Caco-2 (cell line): ENCODE measurements at regions of chr19 and their contacts with region 1.

Region 1: DNA sequence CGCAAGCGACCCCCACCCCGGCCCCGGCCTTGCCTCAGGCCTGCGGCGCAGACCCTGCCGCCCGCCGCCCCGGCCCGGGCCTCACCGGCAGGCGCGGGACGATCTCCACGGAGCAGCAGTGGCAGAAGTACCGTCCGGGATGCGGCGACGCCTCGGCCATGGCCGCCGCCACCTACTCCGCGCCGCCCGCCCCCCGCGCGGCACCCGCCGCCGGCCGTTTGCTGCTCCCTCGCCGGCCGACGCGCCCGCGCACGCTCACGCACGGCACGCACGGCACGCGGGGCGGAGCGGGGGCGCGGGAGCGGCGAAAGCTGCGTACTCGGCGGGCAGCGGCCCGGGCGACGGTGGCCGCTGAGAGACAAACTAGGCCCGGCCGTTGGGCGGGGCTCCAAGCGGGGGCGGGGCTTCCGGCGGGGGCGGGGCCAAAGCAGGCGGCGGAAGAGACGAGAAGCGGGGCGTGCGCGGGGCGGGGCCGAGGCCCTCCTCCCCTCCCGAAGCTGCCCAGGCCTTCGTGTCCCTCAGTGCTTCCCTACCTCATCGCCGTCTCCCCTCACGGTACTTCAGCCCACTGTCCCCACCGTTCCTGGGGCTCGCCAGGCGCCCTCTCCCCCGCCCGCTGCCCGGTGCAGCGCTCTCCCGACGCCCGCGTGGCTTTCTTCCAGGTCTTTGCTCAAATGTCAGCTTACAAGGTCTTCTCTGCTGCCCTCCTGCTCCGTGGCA is at the start of gene RNF126:
- DNase-seq: peak; percentile 90 to 91
- H3K4me3 ChIP-seq: peak within 1 kb of the TSS; percentile 96
- H3K4me3 Mint-ChIP-seq: peak within 1 kb of the TSS; percentile 80
- H3K27ac Mint-ChIP-seq: peak within 1 kb of the TSS; percentile 76
- H3K4me1 ChIP-seq: peaks cover 27% of the 10 kb centered on the region
- H3K4me1 Mint-ChIP-seq: no peaks in the 10 kb centered on the region
- H3K27me3 ChIP-seq: no peaks in the 10 kb centered on the region
- H3K27me3 Mint-ChIP-seq: no peaks in the 10 kb centered on the region
- CTCF ChIP-seq: no peak
- total RNA-seq, gene RNF126: 74.6 and 77.9 TPM in 2 replicates

Region 2: GRCh38 chr19:680287-681028 is 17.3 kb after region 1 on chr19:
- CTCF ChIA-PET with region 1: interaction called, 4 read pairs
- POLR2A ChIA-PET with region 1: interaction called, 5 read pairs
- intact Hi-C with region 1: loop called (anchors 2 kb)
- DNase-seq: peak; percentile 98 to 99
- H3K4me3 ChIP-seq: peak overlapping the region; percentile 61
- H3K4me3 Mint-ChIP-seq: peak overlapping the region; percentile 75
- H3K27ac Mint-ChIP-seq: peak overlapping the region; percentile 82
- H3K4me1 ChIP-seq: peaks cover 11% of the 10 kb centered on the region
- H3K4me1 Mint-ChIP-seq: peaks cover 1% of the 10 kb centered on the region
- H3K27me3 ChIP-seq: no peaks in the 10 kb centered on the region
- H3K27me3 Mint-ChIP-seq: no peaks in the 10 kb centered on the region
- CTCF ChIP-seq: peak; percentile 23 to 45

Region 3: GRCh38 chr19:703651-704446 is 40.7 kb after region 1 on chr19:
- CTCF ChIA-PET with region 1: no interaction called
- POLR2A ChIA-PET with region 1: no interaction called
- intact Hi-C with region 1: no loop called
- DNase-seq: peak; percentile 54 to 56
- H3K4me3 ChIP-seq: no peak overlapping the region
- H3K4me3 Mint-ChIP-seq: no peak overlapping the region
- H3K27ac Mint-ChIP-seq: no peak overlapping the region
- H3K4me1 ChIP-seq: no peaks in the 10 kb centered on the region
- H3K4me1 Mint-ChIP-seq: no peaks in the 10 kb centered on the region
- H3K27me3 ChIP-seq: no peaks in the 10 kb centered on the region
- H3K27me3 Mint-ChIP-seq: no peaks in the 10 kb centered on the region
- CTCF ChIP-seq: no peak

Region 4: DNA sequence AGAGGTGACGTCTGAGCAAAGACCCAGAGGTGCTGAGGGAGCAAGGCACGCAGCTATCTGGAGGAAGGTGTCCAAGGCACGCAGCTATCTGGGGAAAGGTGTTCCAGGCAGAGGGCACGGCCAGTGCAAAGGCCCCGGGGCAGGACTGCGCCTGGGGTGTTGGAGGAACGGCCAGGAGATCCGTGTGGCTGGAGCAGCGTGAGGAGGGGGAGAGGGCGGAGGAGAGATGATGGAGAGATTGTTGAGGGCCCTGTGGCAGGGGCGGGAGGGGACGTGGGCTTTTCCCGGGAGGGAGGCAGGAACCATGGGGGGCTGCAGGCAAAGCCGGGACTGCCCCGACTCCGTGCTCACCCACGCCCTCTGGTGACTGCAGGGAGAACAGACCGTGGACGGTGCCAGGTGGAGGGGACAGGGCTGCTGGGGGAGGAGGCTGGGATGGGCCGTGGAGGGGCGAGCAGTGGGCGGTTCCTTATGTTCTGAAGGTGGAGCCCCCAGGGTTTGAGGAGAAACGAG is 74.5 kb after region 1 on chr19:
- CTCF ChIA-PET with region 1: interaction called, 8 read pairs
- POLR2A ChIA-PET with region 1: no interaction called
- intact Hi-C with region 1: loop called (anchors 1 kb)
- DNase-seq: peak; percentile 59 to 63
- H3K4me3 ChIP-seq: no peak overlapping the region
- H3K4me3 Mint-ChIP-seq: no peak overlapping the region
- H3K27ac Mint-ChIP-seq: peak overlapping the region; percentile 66
- H3K4me1 ChIP-seq: peaks cover 16% of the 10 kb centered on the region
- H3K4me1 Mint-ChIP-seq: peaks cover 7% of the 10 kb centered on the region
- H3K27me3 ChIP-seq: no peaks in the 10 kb centered on the region
- H3K27me3 Mint-ChIP-seq: no peaks in the 10 kb centered on the region
- CTCF ChIP-seq: peak; percentile 39 to 42

Region 5: GRCh38 chr19:771332-771785 is 108.2 kb after region 1 on chr19:
- CTCF ChIA-PET with region 1: no interaction called
- POLR2A ChIA-PET with region 1: no interaction called
- intact Hi-C with region 1: no loop called
- DNase-seq: peak; percentile 53 to 63
- H3K4me3 ChIP-seq: no peak overlapping the region
- H3K4me3 Mint-ChIP-seq: no peak overlapping the region
- H3K27ac Mint-ChIP-seq: no peak overlapping the region
- H3K4me1 ChIP-seq: no peaks in the 10 kb centered on the region
- H3K4me1 Mint-ChIP-seq: no peaks in the 10 kb centered on the region
- H3K27me3 ChIP-seq: no peaks in the 10 kb centered on the region
- H3K27me3 Mint-ChIP-seq: no peaks in the 10 kb centered on the region
- CTCF ChIP-seq: peak; percentile 29